ENCODE measurements at regions of chr6 and their contacts with region 1.

Region 1: GRCh38 chr6:55276745-55277530 is 50.3 kb upstream of the GFRAL start:
- DNase-seq: peak; percentile 42
- ATAC-seq: peak; percentile 85
- H3K4me3 ChIP-seq: no peak overlapping the region
- H3K27ac ChIP-seq: peak overlapping the region; percentile 74
- H3K4me1 ChIP-seq: peaks cover 13% of the 10 kb centered on the region
- H3K27me3 ChIP-seq: peaks cover 3% of the 10 kb centered on the region; the same call in 1 of the 2 replicates
- CTCF ChIP-seq: peak; percentile 76; the same call in 1 of the 2 replicates

Region 2: GRCh38 chr6:55293116-55293515 is 16.2 kb after region 1 on chr6:
- CTCF ChIA-PET with region 1: interaction called, 14 read pairs
- POLR2A ChIA-PET with region 1: no interaction called
- in situ Hi-C with region 1: no loop called
- intact Hi-C with region 1: no loop called
- DNase-seq: no peak
- ATAC-seq: no peak
- H3K4me3 ChIP-seq: no peak overlapping the region
- H3K27ac ChIP-seq: no peak overlapping the region
- H3K4me1 ChIP-seq: no peaks in the 10 kb centered on the region
- H3K27me3 ChIP-seq: no peaks in the 10 kb centered on the region
- CTCF ChIP-seq: peak; percentile 51; the same call in 1 of the 2 replicates

Region 3: GRCh38 chr6:55953335-55953734 is 676.4 kb after region 1 on chr6:
- CTCF ChIA-PET with region 1: interaction called, 3 read pairs
- POLR2A ChIA-PET with region 1: no interaction called
- in situ Hi-C with region 1: no loop called
- intact Hi-C with region 1: loop called (anchors 5 kb)
- DNase-seq: peak; percentile 57
- ATAC-seq: peak; percentile 96
- H3K4me3 ChIP-seq: peak overlapping the region; percentile 19 to 31
- H3K27ac ChIP-seq: peak overlapping the region; percentile 82
- H3K4me1 ChIP-seq: peaks cover 6% of the 10 kb centered on the region
- H3K27me3 ChIP-seq: no peaks in the 10 kb centered on the region
- CTCF ChIP-seq: peak; percentile 67; the same call in 1 of the 2 replicates

Region 4: DNA sequence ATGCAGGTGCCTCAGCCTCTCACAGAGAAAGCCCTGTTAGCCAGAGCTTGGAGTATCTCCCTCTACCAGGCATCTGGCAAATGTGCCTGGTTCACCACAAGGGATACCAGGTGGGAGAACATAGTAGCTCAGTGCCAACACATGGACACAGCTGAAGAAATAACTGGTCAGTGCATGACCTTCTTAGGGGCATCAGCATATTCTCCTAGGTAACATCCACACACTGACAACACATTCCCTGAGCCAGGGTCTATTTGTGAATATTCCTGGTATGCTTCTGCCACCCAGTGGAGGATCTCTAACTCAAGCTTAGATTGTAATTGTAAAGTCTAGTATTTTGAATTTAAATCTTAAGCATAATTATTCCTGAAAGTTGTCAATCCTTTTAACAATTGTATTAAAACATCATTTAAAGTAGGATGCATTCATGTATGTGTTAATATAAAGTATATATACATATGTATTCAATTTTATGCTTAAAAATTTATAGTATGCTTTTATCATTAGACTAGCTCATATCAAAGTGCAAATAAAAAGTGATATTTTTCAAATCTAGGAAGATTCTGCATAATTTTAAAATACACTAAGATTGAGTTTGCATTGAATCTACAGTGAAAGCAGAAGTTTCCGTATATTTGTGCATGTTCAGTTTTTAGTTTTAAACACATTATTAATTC is 1015.7 kb after region 1 on chr6:
- CTCF ChIA-PET with region 1: interaction called, 7 read pairs
- POLR2A ChIA-PET with region 1: no interaction called
- in situ Hi-C with region 1: no loop called
- intact Hi-C with region 1: loop called (anchors 5 kb)
- DNase-seq: peak; percentile 72
- ATAC-seq: peak; percentile 90
- H3K4me3 ChIP-seq: no peak overlapping the region
- H3K27ac ChIP-seq: peak overlapping the region; percentile 59; the same call in 1 of the 2 replicates
- H3K4me1 ChIP-seq: peaks cover 8% of the 10 kb centered on the region; the same call in 1 of the 2 replicates
- H3K27me3 ChIP-seq: no peaks in the 10 kb centered on the region
- CTCF ChIP-seq: peak; percentile 77